ENCODE measurements at regions of chr14 and their contacts with region 1.

Region 1: GRCh38 chr14:72948481-72949138 is 22.3 kb downstream of the DCAF4 start:
- DNase-seq: peak; percentile 77 to 79
- H3K4me3 ChIP-seq: no peak overlapping the region
- H3K27ac ChIP-seq: no peak overlapping the region
- H3K4me1 ChIP-seq: peaks cover 0 to 2% of the 10 kb centered on the region in 2 donors
- H3K27me3 ChIP-seq: no peaks in the 10 kb centered on the region
- CTCF ChIP-seq: peak; percentile 64 to 88 (median 74)
- POLR2A ChIP-seq: no peak

Region 2: GRCh38 chr14:72516936-72517700 is 431.5 kb before region 1 on chr14:
- intact Hi-C with region 1: loop called (anchors 5 kb)
- DNase-seq: peak; percentile 65 to 70
- H3K4me3 ChIP-seq: no peak overlapping the region
- H3K27ac ChIP-seq: no peak overlapping the region
- H3K4me1 ChIP-seq: peaks cover 10 to 24% of the 10 kb centered on the region in 2 donors
- H3K27me3 ChIP-seq: no peaks in the 10 kb centered on the region
- CTCF ChIP-seq: peak; percentile 74 to 97 (median 82)
- POLR2A ChIP-seq: no peak

Region 3: GRCh38 chr14:72792051-72792788 is 156.4 kb before region 1 on chr14:
- intact Hi-C with region 1: no loop called
- DNase-seq: no peak
- H3K4me3 ChIP-seq: no peak overlapping the region
- H3K27ac ChIP-seq: no peak overlapping the region
- H3K4me1 ChIP-seq: no peaks in the 10 kb centered on the region
- H3K27me3 ChIP-seq: no peaks in the 10 kb centered on the region
- CTCF ChIP-seq: no peak
- POLR2A ChIP-seq: no peak

Region 4: GRCh38 chr14:72893636-72894321 is 54.8 kb before region 1 on chr14 and contains the start of gene DPF3:
- intact Hi-C with region 1: loop called (anchors 10 kb)
- DNase-seq: peak; percentile 96 to 97
- H3K4me3 ChIP-seq: peak within 1 kb of the TSS; percentile 16 to 77 (median 57)
- H3K27ac ChIP-seq: no peak within 1 kb of the TSS
- H3K4me1 ChIP-seq: peaks cover 3 to 20% of the 10 kb centered on the region in 2 donors
- H3K27me3 ChIP-seq: no peaks in the 10 kb centered on the region
- CTCF ChIP-seq: no peak
- POLR2A ChIP-seq: peak in 1 of 2 donors; percentile 72
- total RNA-seq, gene DPF3: 0.27 to 3.3 (median 1.3) TPM

Measured in thyroid gland (tissue), 4 donors.